PC-9 (cell line): ENCODE measurements at regions of chr5 and their contacts with region 1.

Region 1: GRCh38 chr5:73454351-73455036 is 5.9 kb upstream of the FOXD1 start:
- DNase-seq: peak; percentile 69 to 80
- H3K4me3 ChIP-seq: no peak overlapping the region
- H3K27ac ChIP-seq: no peak overlapping the region
- H3K4me1 ChIP-seq: peaks cover 15% of the 10 kb centered on the region; the same call in 1 of the 2 replicates
- H3K27me3 ChIP-seq: no peaks in the 10 kb centered on the region
- CTCF ChIP-seq: peak; percentile 84

Region 2: GRCh38 chr5:72955768-72956323 is 498.6 kb before region 1 on chr5 and contains the start of gene FCHO2:
- CTCF ChIA-PET with region 1: no interaction called
- POLR2A ChIA-PET with region 1: no interaction called
- intact Hi-C with region 1: loop called (anchors 10 kb)
- DNase-seq: peak; percentile 95 to 97
- H3K4me3 ChIP-seq: peak within 1 kb of the TSS; percentile 74
- H3K27ac ChIP-seq: peak within 1 kb of the TSS; percentile 99
- H3K4me1 ChIP-seq: peaks cover 58% of the 10 kb centered on the region
- H3K27me3 ChIP-seq: no peaks in the 10 kb centered on the region
- CTCF ChIP-seq: peak; percentile 84
- total RNA-seq, gene FCHO2: 13.6 and 26.1 TPM in 2 replicates

Region 3: DNA sequence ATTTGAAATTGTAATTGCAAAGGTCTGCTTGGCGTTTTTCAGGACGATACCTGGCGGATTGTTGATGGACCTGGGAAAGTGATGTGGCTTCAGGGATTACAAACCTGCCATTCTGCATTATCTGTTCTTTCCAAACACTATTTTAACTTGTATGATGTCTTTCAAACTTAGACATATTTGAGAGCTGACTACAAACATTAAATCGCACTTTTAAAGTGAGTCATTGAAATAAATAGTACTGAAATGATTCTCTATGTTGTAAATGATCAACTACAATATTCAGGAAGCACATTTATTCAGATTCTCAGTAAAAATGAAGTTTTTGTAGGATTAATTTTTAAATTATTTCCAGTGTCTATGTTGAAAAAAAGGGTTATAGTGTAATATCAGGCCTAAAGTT is 366.5 kb before region 1 on chr5:
- CTCF ChIA-PET with region 1: no interaction called
- POLR2A ChIA-PET with region 1: no interaction called
- intact Hi-C with region 1: loop called (anchors 2 kb)
- DNase-seq: no peak
- H3K4me3 ChIP-seq: no peak overlapping the region
- H3K27ac ChIP-seq: no peak overlapping the region
- H3K4me1 ChIP-seq: 0 out of 2 replicates have a peak, but pooled peaks cover 1% of the 10 kb centered on the region
- H3K27me3 ChIP-seq: no peaks in the 10 kb centered on the region
- CTCF ChIP-seq: no peak

Region 4: GRCh38 chr5:73135429-73136054 is 319.0 kb before region 1 on chr5:
- CTCF ChIA-PET with region 1: interaction called, 3 read pairs
- POLR2A ChIA-PET with region 1: no interaction called
- intact Hi-C with region 1: loop called (anchors 5 kb)
- DNase-seq: peak in 1 of 2 experiments; percentile 17
- H3K4me3 ChIP-seq: no peak overlapping the region
- H3K27ac ChIP-seq: no peak overlapping the region
- H3K4me1 ChIP-seq: no peaks in the 10 kb centered on the region
- H3K27me3 ChIP-seq: no peaks in the 10 kb centered on the region
- CTCF ChIP-seq: peak; percentile 71

Region 5: GRCh38 chr5:73498057-73499008 is 43.8 kb after region 1 on chr5 and contains the start of gene BTF3:
- CTCF ChIA-PET with region 1: interaction called, 4 read pairs
- POLR2A ChIA-PET with region 1: interaction called, 18 read pairs
- intact Hi-C with region 1: loop called (anchors 2 kb)
- DNase-seq: peak; percentile 93 to 97
- H3K4me3 ChIP-seq: peak within 1 kb of the TSS; percentile 91
- H3K27ac ChIP-seq: peak within 1 kb of the TSS; percentile 82
- H3K4me1 ChIP-seq: peaks cover 38% of the 10 kb centered on the region
- H3K27me3 ChIP-seq: no peaks in the 10 kb centered on the region
- CTCF ChIP-seq: no peak
- total RNA-seq, gene BTF3: 635 and 694 TPM in 2 replicates

Region 6: DNA sequence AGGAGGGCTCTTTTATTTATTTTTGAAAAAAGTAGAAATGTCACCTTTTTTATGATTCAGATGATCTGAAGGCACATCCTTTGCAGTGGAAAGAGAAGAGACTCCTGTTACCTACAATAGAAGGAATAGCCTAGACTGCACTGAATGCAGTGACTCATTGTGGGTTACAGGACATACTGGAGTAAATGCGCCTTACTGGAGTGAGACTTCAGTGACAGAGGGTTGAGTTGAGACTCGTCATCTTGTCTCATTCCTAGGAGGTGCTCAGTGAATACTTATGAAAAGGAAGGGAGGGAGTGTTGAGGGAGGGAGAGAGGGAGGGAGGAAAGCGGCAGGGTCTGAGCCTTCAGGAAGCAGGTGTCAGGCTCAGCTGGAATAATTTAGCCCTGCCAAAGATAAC is 85.7 kb after region 1 on chr5:
- CTCF ChIA-PET with region 1: no interaction called
- POLR2A ChIA-PET with region 1: no interaction called
- intact Hi-C with region 1: loop called (anchors 5 kb)
- DNase-seq: peak; percentile 50 to 93
- H3K4me3 ChIP-seq: no peak overlapping the region
- H3K27ac ChIP-seq: peak overlapping the region; percentile 83
- H3K4me1 ChIP-seq: peaks cover 37% of the 10 kb centered on the region
- H3K27me3 ChIP-seq: no peaks in the 10 kb centered on the region
- CTCF ChIP-seq: no peak